Colonic mucosa (tissue), 4 donors: ENCODE measurements at regions of chr5 and their contacts with region 1.

Region 1: DNA sequence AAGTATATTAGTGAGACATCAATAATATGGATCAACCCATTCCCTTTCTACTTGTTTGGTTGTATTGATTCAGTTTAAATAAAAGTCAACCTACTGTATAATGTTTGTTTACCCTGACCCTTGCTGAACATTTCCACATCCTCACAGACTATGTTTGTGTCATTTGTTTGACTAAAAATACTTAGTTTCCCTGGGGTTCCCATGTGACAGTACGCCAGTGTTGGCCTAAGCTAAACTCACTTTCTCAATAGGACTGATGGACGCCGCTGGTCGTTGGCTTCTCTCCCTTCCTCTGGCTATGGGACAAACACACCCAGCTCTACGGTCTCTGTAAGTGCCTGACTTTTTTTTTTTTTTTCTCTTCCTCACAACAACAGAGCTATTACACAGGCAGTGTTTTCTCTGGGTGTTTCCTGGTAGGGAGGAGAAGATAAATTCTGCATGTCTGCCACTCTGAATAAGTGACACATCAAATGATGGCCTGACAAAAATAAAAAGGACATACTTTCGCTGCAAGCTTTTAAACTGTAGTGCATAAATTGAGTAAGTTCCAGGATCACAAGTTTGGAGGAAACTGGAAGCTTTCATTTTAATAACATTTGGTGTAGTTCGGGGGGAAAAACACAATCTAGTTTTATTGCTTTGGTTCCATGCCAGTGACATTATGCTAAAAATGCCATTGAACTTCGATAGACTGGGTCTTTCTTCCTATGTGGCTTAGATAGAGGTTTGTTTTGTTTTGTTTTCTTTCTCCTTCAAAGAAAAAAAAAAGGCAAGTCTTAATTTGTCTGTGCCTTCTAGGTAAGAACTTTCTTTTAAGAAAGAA is 101.0 kb downstream of the CD180 start:
- DNase-seq: peak; percentile 70
- H3K4me3 ChIP-seq: no peak overlapping the region
- H3K27ac ChIP-seq: peak overlapping the region; percentile 54
- H3K4me1 ChIP-seq: no peaks in the 10 kb centered on the region
- H3K27me3 ChIP-seq: no peaks in the 10 kb centered on the region
- CTCF ChIP-seq: no peak

Region 2: GRCh38 chr5:66057239-66057638 is 1038.3 kb before region 1 on chr5:
- intact Hi-C with region 1: no loop called
- DNase-seq: no peak
- H3K4me3 ChIP-seq: no peak overlapping the region
- H3K27ac ChIP-seq: no peak overlapping the region
- H3K4me1 ChIP-seq: no peaks in the 10 kb centered on the region
- H3K27me3 ChIP-seq: no peaks in the 10 kb centered on the region
- CTCF ChIP-seq: no peak

Region 3: DNA sequence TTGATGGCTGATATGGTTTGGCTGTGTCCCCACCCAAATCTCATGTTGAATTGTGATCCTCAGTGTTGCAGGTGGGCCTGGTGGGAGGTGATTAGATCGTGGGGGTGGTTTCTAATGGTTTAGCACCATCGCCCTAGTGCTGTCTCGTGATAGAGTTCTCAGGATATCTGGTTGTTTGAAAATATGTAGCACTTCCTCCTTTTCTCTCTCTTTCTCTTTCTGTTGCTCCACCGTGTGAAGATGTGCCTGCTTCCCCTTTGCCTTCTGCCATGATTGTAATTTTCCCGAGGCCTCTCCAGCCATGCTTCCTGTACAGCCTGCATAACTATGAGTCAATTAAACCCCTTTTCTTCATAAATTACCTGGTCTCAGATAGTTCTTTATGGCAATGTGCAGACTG is 839.8 kb before region 1 on chr5:
- intact Hi-C with region 1: no loop called
- DNase-seq: no peak
- H3K4me3 ChIP-seq: no peak overlapping the region
- H3K27ac ChIP-seq: no peak overlapping the region
- H3K4me1 ChIP-seq: no peaks in the 10 kb centered on the region
- H3K27me3 ChIP-seq: no peaks in the 10 kb centered on the region
- CTCF ChIP-seq: no peak

Region 4: GRCh38 chr5:67003935-67004729 is 91.4 kb before region 1 on chr5:
- intact Hi-C with region 1: loop called (anchors 10 kb)
- DNase-seq: peak; percentile 94
- H3K4me3 ChIP-seq: peak overlapping the region; percentile 41
- H3K27ac ChIP-seq: peak overlapping the region; percentile 74
- H3K4me1 ChIP-seq: no peaks in the 10 kb centered on the region
- H3K27me3 ChIP-seq: no peaks in the 10 kb centered on the region
- CTCF ChIP-seq: no peak